ENCODE measurements at regions of chr18 and their contacts with region 1.

Region 1: DNA sequence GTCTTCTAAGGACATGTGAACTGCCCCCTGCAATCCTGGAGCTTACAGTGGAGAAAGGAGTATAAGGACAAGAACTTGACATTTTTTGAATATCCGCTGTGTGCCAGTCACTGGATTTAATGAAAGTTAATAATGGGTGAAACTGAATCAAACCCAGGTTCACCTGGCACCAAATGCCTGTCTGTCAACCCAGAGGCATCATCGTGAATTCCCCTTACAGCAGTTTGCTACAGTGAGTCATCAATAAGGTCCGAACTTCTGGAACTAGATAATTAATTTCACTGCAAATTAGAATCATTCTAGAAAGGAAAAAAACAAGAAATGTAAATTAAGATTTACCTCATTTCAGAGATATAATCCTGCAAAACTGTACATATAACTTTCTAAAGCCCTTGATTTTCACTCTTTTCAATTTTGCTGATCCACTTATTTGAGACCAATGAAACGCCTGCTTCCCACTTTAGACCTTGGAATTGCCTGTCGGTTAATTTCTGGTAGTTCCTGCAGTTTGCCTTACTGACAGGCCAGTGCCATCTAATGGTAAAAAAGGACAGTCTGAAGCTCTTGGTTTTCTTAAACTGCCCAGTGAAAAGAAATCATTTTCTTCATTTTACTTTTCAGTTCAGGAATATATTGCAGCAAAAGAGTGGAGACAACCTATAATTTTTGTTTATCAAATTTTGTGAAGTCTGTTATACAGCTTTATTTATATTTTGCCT is 8.2 kb downstream of the DSG2 start:
- DNase-seq: no peak
- ATAC-seq: peak; percentile 81

Region 2: GRCh38 chr18:30556112-30556511 is 950.1 kb before region 1 on chr18:
- intact Hi-C with region 1: no loop called
- DNase-seq: no peak
- ATAC-seq: no peak

Region 3: DNA sequence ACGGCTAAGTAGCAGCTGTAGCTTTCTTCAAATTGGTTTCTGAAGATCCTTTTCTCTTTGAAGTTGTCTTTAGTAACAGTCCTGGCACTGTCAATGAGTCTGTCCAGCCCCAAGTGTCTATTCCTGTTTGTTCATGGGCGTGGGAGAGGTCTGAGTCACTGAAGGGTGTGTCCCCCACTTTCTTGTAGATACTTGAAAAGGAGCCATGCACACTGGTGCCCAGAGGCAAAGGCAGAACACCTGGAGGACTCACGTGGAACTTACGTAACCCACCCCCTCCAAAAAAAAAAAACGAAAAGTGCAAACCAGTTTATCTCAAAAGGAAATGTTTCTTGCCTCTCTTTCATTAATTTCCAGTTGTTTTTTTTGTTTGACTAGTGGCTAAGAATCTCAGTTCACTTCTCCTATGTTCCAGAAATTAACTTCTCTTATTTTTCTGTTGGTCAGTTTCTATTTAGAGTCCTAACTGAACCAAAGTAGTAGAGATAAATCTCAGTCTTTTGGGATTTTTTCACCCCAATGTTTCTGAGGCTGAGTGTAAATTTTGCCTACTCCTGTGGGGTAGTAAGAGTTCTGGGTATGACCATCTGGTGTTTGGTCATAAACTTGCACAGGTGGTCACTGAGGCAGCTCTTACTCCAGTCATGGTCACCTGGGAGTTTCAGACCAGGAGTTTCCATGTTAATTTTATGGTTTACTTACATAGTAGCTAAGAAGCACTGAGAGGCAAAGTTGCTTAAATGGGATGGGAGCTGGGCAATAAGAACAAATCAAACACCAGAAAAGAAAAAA is 518.5 kb before region 1 on chr18:
- intact Hi-C with region 1: loop called (anchors 10 kb)
- DNase-seq: no peak
- ATAC-seq: no peak

Region 4: DNA sequence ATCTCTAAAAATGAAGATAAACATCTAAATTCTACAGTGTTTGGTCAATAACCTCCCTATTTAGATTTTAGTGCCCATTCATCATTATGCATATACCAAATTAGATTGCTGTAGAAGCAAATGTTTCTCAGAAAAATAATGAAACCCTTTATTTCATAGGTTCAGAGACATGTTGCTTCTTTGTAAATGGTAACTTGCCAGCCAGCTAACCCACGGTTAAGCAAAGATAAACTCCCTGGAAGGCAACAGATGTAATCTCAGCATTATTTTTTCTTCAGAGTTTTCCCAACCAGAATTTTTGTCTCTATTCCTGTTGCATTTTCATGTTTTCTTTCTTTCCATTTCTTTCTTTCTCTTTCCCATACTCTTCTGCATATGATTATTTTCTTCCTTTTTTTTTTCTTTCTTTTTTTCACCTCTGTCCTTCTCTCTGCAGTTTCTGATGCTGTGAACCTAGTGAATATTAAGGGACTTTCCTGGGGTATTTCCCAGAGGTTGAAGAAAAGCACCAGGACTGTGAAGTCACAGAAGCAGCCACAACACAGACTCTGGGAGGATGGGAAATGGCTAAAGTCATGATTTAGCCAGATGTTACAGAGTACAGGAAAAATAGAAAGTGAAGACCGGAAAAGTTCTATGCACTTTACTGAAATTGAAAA is 238.2 kb before region 1 on chr18:
- intact Hi-C with region 1: loop called (anchors 10 kb)
- DNase-seq: no peak
- ATAC-seq: no peak

Region 5: DNA sequence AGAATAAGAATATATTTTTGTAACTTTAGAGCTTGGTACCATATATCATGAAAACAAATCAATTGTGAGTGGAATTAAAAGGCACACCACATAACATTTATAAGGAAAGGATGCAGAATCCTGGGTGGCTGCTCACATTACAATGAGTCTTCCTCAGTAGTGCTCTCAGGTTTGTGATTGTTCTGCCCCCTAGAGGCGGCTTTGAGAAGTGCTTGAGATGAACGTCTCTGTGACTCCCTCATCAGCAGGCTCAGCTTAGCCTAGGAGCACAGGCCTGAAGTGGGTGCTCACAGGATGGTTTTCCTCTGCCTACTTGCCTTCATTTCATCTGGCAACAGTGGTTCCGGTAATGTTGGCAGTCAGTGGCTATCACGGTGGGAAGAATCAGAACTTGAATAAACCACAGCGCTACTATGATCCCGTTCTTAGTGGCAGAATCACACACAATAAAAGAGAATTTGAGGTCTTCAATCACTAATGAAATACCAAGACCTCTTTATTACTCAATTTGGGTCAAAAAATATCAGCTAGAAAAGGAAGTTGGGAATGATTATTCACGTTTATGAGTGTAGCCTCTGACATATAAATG is 216.3 kb after region 1 on chr18:
- intact Hi-C with region 1: no loop called
- DNase-seq: peak; percentile 75
- ATAC-seq: peak; percentile 85